CD4-positive, alpha-beta memory T cell (primary cell): ENCODE measurements at regions of chr17 and their contacts with region 1.

Region 1: DNA sequence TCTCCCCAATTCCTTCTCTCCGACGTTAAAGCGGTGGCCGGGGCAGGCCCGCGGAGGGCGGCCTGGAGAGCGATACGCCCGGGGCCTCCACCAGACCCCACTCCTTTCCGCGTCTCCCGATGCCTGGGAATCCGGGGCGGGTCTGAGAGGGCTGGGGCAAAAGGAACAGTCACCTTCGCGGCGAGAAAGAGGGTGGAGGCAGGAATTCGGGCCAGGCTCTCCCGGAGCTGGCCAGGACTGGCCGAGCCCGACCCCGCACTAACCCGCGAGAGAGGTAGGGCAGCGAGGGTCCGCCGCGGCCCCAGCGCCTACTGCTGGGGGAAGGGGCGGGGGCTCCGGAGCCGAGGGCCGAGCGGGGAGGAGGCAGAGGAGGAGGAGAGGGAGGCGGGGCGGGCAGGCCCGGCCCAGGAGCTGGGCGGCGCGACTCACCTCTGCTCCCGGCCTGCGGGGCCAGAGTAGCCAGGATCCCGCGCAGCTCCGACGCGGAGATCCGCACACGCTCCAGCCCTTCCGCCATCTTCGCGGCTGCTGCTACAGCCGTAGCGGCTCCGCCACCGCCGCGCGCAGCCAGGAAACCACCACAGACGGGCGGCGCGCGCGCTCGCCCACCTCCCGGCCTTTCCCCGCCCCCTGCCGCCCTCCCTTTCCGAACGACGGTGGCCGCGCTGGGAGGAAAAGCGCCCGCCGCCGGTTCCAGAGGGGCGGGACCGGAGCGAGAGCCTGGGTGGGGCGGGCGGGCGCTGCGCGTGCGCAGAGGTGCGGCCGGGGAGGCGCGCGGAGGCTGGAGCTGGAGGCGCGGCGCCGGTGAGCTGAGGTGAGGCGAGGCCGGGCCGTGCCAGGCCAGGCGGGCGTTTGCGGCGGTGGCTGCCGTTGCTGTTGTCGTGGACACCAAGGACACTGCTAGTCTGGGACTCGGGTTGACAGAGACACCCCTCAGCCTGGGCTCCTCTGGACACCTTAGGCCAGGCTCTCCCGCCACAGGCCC is at the starts of genes SMG6 and SRR:
- DNase-seq: peak; percentile 93 to 94 (median 93)
- H3K4me3 ChIP-seq: peak within 1 kb of the TSS; percentile 84 to 94
- H3K4me3 Mint-ChIP-seq: peak within 1 kb of the TSS; percentile 92 to 95 (median 93)
- H3K27ac ChIP-seq: peak within 1 kb of the TSS; percentile 88
- H3K27ac Mint-ChIP-seq: peak within 1 kb of the TSS; percentile 90 to 93 (median 91)
- H3K4me1 ChIP-seq: peaks cover 26% of the 10 kb centered on the region
- H3K4me1 Mint-ChIP-seq: peaks cover 24 to 59% (median 41%) of the 10 kb centered on the region in 4 donors
- H3K27me3 ChIP-seq: no peaks in the 10 kb centered on the region
- H3K27me3 Mint-ChIP-seq: no peaks in the 10 kb centered on the region
- total RNA-seq, gene SMG6: 51.1 to 58.5 TPM
- total RNA-seq, gene SRR: 6.9 to 13.1 TPM

Region 2: GRCh38 chr17:2253768-2254406 is 49.6 kb before region 1 on chr17:
- CTCF ChIA-PET with region 1: no interaction called
- POLR2A ChIA-PET with region 1: no interaction called
- intact Hi-C with region 1: no loop called
- DNase-seq: peak in 1 of 5 donors; percentile 18
- H3K4me3 ChIP-seq: no peak overlapping the region
- H3K4me3 Mint-ChIP-seq: peak overlapping the region in 3 of 8 donors; percentile 24 to 61 (median 57)
- H3K27ac ChIP-seq: no peak overlapping the region
- H3K27ac Mint-ChIP-seq: peak overlapping the region; percentile 43 to 87 (median 82)
- H3K4me1 ChIP-seq: peaks cover 26% of the 10 kb centered on the region
- H3K4me1 Mint-ChIP-seq: peaks cover 25 to 61% (median 37%) of the 10 kb centered on the region in 4 donors
- H3K27me3 ChIP-seq: no peaks in the 10 kb centered on the region
- H3K27me3 Mint-ChIP-seq: no peaks in the 10 kb centered on the region

Region 3: DNA sequence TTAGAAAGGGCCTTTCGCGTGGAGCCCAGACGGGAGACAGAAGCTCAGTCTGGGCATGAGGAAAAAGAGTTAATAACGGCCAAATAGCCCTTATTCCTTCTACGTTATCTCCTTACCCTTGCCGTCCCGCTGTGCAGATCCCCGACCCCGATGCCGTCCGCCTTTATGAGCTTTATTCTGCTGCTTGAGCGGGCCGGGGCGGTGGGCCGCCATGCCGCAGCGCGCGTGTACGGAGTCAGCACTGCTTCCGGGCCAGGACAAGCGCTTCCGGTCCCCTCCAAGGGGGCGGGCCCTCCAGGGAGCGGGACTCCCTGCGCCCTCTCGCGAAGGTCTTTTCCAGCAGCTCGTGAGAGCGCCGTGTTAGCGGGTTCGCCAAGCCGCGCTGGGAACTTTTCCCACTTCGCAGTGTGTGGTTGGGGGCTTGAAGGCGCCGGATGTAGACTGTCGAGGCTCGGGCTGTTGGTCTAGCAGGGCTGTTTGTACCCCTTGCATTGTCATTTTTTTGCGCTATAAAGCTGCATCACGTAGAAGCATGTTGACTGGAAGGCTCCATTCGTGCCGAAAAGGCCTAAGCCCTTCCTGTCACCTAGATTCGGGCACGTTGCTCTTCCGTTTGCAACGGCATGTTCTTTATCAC is 32.8 kb after region 1 on chr17 and contains the start of gene TSR1:
- CTCF ChIA-PET with region 1: interaction called, 8 read pairs
- POLR2A ChIA-PET with region 1: interaction called, 34 read pairs
- intact Hi-C with region 1: loop called (anchors 1 kb)
- DNase-seq: peak; percentile 86 to 88 (median 87)
- H3K4me3 ChIP-seq: peak within 1 kb of the TSS; percentile 94 to 97
- H3K4me3 Mint-ChIP-seq: peak within 1 kb of the TSS; percentile 97 to 100 (median 99)
- H3K27ac ChIP-seq: peak within 1 kb of the TSS; percentile 70
- H3K27ac Mint-ChIP-seq: peak within 1 kb of the TSS; percentile 93 to 98 (median 96)
- H3K4me1 ChIP-seq: peaks cover 20% of the 10 kb centered on the region
- H3K4me1 Mint-ChIP-seq: peaks cover 18 to 34% (median 26%) of the 10 kb centered on the region in 4 donors
- H3K27me3 ChIP-seq: no peaks in the 10 kb centered on the region
- H3K27me3 Mint-ChIP-seq: no peaks in the 10 kb centered on the region
- total RNA-seq, gene TSR1: 22.6 to 31.7 TPM

Region 4: GRCh38 chr17:2354311-2354710 is 50.8 kb after region 1 on chr17:
- CTCF ChIA-PET with region 1: interaction called, 11 read pairs
- POLR2A ChIA-PET with region 1: interaction called, 12 read pairs
- intact Hi-C with region 1: loop called (anchors 5 kb)
- DNase-seq: no peak
- H3K4me3 ChIP-seq: no peak overlapping the region
- H3K4me3 Mint-ChIP-seq: peak overlapping the region in 4 of 8 donors; percentile 7 to 69 (median 62)
- H3K27ac ChIP-seq: no peak overlapping the region
- H3K27ac Mint-ChIP-seq: peak overlapping the region in 6 of 7 donors; percentile 41 to 97 (median 82)
- H3K4me1 ChIP-seq: peaks cover 17% of the 10 kb centered on the region
- H3K4me1 Mint-ChIP-seq: peaks cover 10 to 20% (median 16%) of the 10 kb centered on the region in 4 donors
- H3K27me3 ChIP-seq: no peaks in the 10 kb centered on the region
- H3K27me3 Mint-ChIP-seq: no peaks in the 10 kb centered on the region

Region 5: GRCh38 chr17:2401426-2402221 is 98.1 kb after region 1 on chr17:
- CTCF ChIA-PET with region 1: no interaction called
- POLR2A ChIA-PET with region 1: interaction called, 7 read pairs
- intact Hi-C with region 1: loop called (anchors 1 kb)
- DNase-seq: peak; percentile 99 to 100 (median 100)
- H3K4me3 ChIP-seq: peak overlapping the region; percentile 65 to 89
- H3K4me3 Mint-ChIP-seq: peak overlapping the region; percentile 90 to 100 (median 98)
- H3K27ac ChIP-seq: peak overlapping the region; percentile 95
- H3K27ac Mint-ChIP-seq: peak overlapping the region; percentile 99 to 100 (median 100)
- H3K4me1 ChIP-seq: peaks cover 35% of the 10 kb centered on the region
- H3K4me1 Mint-ChIP-seq: peaks cover 18 to 54% (median 33%) of the 10 kb centered on the region in 4 donors
- H3K27me3 ChIP-seq: no peaks in the 10 kb centered on the region
- H3K27me3 Mint-ChIP-seq: peaks cover 0 to 8% of the 10 kb centered on the region in 2 donors